ENCODE measurements at regions of chr11 and their contacts with region 1.

Region 1: DNA sequence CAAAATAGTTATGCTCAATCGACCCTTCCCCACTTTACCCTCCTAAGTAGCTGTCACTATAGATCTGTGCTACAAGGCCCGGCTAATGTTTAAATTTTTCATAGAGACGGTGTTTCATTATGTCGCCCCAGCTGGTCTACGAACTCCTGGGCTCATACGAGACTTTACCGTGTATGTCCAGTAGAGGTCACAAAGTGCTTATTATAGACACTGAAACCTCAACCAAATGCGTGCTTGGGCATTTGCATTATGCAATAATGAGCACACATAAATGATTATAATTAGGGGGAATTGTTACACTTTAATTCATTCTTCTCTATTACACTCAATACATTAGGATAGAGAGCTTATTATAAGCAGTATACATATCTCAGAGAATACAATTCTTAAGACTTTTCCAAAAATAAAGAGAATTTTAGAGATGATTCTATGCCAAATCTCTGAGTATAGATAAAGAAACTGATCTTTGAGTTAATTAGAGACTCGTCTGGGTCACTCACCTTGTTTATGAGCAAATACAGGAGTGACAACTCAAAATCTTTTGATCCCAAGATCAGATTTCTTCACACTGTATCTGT is 12.5 kb upstream of the MRPL16 start:
- DNase-seq: peak; percentile 42 to 86 (median 52)
- ATAC-seq: peak; percentile 96
- H3K4me3 ChIP-seq: no peak overlapping the region
- H3K27ac ChIP-seq: no peak overlapping the region; the same call in 2 of the 3 replicates
- H3K4me1 ChIP-seq: peaks cover 0 to 2% of the 10 kb centered on the region in 2 experiments; a peak in 2 of 5 replicates
- H3K27me3 ChIP-seq: no peaks in the 10 kb centered on the region
- CTCF ChIP-seq: peak; percentile 78 to 87 (median 81)
- EP300 ChIP-seq: no peak
- POLR2A ChIP-seq: no peak
- RAD21 ChIP-seq: peak; percentile 96 to 98

Region 2: GRCh38 chr11:59918987-59919589 is 96.0 kb after region 1 on chr11:
- CTCF ChIA-PET with region 1: interaction called, 17 read pairs
- POLR2A ChIA-PET with region 1: no interaction called
- in situ Hi-C with region 1: loop called (anchors 5 kb)
- intact Hi-C with region 1: loop called (anchors 1 kb)
- DNase-seq: peak; percentile 34 to 74 (median 42)
- ATAC-seq: peak; percentile 71
- H3K4me3 ChIP-seq: no peak overlapping the region
- H3K27ac ChIP-seq: no peak overlapping the region
- H3K4me1 ChIP-seq: no peaks in the 10 kb centered on the region
- H3K27me3 ChIP-seq: no peaks in the 10 kb centered on the region
- CTCF ChIP-seq: peak; percentile 59 to 62 (median 61)
- EP300 ChIP-seq: no peak
- POLR2A ChIP-seq: no peak
- RAD21 ChIP-seq: peak; percentile 59 to 89

Region 3: GRCh38 chr11:59960502-59961381 is 137.7 kb after region 1 on chr11:
- CTCF ChIA-PET with region 1: no interaction called
- POLR2A ChIA-PET with region 1: no interaction called
- in situ Hi-C with region 1: no loop called
- intact Hi-C with region 1: loop called (anchors 2 kb)
- DNase-seq: peak; percentile 84 to 90 (median 88)
- ATAC-seq: peak; percentile 88
- H3K4me3 ChIP-seq: no peak overlapping the region
- H3K27ac ChIP-seq: peak overlapping the region; percentile 90
- H3K4me1 ChIP-seq: peaks cover 0 to 25% of the 10 kb centered on the region in 2 experiments; a peak in 3 of 5 replicates
- H3K27me3 ChIP-seq: no peaks in the 10 kb centered on the region
- CTCF ChIP-seq: 0 out of 6 replicates have a peak, but pooled peaks of 1 of the 3 experiments have one; percentile 1
- EP300 ChIP-seq: peak; percentile 100
- POLR2A ChIP-seq: no peak
- RAD21 ChIP-seq: peak; percentile 34 to 47; a peak in 2 of 4 replicates

Region 4: GRCh38 chr11:60251485-60252212 is 428.6 kb after region 1 on chr11:
- CTCF ChIA-PET with region 1: interaction called, 14 read pairs
- POLR2A ChIA-PET with region 1: no interaction called
- in situ Hi-C with region 1: loop called (anchors 10 kb)
- intact Hi-C with region 1: loop called (anchors 1 kb)
- DNase-seq: peak; percentile 27 to 76 (median 36)
- ATAC-seq: peak; percentile 87
- H3K4me3 ChIP-seq: no peak overlapping the region
- H3K27ac ChIP-seq: no peak overlapping the region
- H3K4me1 ChIP-seq: no peaks in the 10 kb centered on the region
- H3K27me3 ChIP-seq: no peaks in the 10 kb centered on the region; a peak in 1 of 5 replicates
- CTCF ChIP-seq: peak; percentile 75 to 86 (median 85)
- EP300 ChIP-seq: no peak
- POLR2A ChIP-seq: no peak
- RAD21 ChIP-seq: peak; percentile 89 to 95